GM10248 (cell line): ENCODE measurements at regions of chr14 and their contacts with region 1.

Region 1: GRCh38 chr14:51884086-51884927 is 23.9 kb downstream of the GNG2 start:
- DNase-seq: peak; percentile 25
- CTCF ChIP-seq: no peak

Region 2: DNA sequence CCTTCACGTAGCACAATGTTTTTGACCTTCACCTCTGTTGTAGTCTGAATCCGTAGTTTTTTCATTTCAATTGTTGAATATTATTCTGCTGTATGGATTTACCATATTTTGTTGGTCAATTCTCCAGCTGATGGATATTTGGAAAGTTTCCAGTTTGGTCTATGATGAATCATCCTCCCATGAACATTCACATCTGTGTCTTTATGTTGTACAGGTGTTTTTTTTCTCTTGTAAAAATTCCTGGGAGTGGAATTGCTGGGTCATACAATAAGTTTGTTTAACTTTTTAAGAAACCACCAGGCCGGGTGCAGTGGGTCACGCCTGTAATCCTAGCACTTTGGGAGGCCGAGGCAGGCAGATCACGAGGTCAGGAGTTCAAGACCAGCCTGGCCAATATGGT is 60.6 kb before region 1 on chr14:
- CTCF ChIA-PET with region 1: no interaction called
- POLR2A ChIA-PET with region 1: no interaction called
- DNase-seq: no peak
- CTCF ChIP-seq: no peak

Region 3: GRCh38 chr14:51895375-51895774 is 11.1 kb after region 1 on chr14:
- CTCF ChIA-PET with region 1: interaction called, 40 read pairs
- POLR2A ChIA-PET with region 1: no interaction called
- DNase-seq: no peak
- CTCF ChIP-seq: no peak

Region 4: DNA sequence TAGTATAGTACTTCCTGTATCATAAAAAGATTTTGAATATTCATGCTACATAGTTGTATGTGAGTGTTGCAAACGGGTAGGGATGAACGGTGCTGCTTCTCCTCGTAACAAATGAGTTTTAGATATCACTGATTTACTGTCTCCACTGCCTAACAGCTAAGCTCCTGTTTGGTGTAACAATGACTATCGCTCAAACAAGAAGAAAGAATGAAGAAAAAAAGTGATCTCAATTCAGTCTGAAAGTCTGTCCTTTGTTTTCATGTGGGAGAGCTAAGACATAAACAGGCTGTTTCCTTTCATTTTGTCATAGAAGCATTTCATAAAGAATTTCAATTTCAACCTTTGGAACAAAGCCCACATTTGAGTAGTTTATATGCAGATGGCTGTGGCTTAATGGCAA is 79.0 kb after region 1 on chr14:
- CTCF ChIA-PET with region 1: no interaction called
- POLR2A ChIA-PET with region 1: no interaction called
- DNase-seq: no peak
- CTCF ChIP-seq: no peak